PC-3 (cell line): ENCODE measurements at regions of chr3 and their contacts with region 1.

Region 1: GRCh38 chr3:4466741-4467521 is at the start of gene SUMF1:
- DNase-seq: peak; percentile 83
- ATAC-seq: peak; percentile 98
- H3K4me3 ChIP-seq: peak within 1 kb of the TSS; percentile 79
- H3K27ac ChIP-seq: peak within 1 kb of the TSS; percentile 63
- H3K4me1 ChIP-seq: no peaks in the 10 kb centered on the region
- H3K27me3 ChIP-seq: no peaks in the 10 kb centered on the region
- CTCF ChIP-seq: no peak
- total RNA-seq, gene SUMF1: 79.1 and 81.5 TPM in 2 replicates

Region 2: DNA sequence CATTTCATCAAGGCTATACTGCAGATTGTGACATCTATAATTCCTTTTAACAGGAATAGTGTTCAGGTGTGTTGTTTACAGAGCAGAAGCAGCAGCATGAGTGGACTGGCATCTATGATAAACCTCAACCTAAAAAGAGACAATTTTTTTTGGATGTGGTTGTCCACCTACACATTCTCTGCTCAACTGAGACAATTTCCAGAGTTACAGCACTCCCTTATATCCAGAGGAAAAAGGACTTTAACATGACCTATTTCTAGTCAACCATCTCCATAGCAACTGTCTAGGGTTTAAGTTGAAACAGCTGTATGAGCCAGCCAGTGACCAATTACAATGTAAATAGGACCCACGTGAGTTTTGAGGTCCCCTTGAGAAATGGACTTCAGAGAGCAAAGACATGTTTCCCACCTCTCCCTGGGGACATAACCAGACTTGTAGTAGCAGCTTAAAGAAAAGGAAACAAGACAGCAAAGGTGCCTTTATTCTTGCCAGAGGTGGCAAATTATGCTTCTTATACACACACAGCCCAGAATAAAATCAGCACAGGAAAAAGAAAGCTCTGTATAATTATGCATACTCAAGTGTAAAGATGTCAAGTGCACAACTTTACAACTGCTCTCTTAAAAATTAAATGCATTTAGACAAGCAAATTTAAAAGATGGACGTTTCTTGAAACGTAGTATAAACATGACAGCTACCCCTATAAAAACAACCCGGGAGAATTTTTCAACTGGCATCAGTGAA is 40.2 kb before region 1 on chr3:
- CTCF ChIA-PET with region 1: no interaction called
- POLR2A ChIA-PET with region 1: no interaction called
- intact Hi-C with region 1: loop called (anchors 2 kb)
- DNase-seq: peak; percentile 93
- ATAC-seq: peak; percentile 96
- H3K4me3 ChIP-seq: peak overlapping the region; percentile 11; the same call in 1 of the 2 replicates
- H3K27ac ChIP-seq: peak overlapping the region; percentile 76
- H3K4me1 ChIP-seq: peaks cover 25% of the 10 kb centered on the region
- H3K27me3 ChIP-seq: no peaks in the 10 kb centered on the region
- CTCF ChIP-seq: no peak

Region 3: DNA sequence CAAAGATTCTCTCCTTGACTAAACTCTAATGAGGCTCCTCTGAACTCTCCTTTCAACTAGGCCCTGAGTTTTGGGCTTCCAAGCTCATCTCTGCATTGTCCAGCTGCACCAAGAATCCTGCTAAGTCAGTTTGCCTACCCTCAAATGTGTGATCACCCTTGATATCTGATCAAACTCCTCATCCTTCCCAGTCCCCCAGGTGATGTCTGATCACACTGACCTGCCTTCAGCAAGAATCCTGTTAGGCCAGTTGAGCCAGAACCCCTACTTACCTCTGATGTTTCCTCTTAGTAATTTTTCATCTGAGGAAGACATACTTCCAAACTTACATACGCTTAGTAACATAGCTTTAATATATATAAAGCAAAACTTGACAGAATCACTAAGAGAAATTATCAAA is 28.6 kb before region 1 on chr3:
- CTCF ChIA-PET with region 1: no interaction called
- POLR2A ChIA-PET with region 1: interaction called, 26 read pairs
- intact Hi-C with region 1: no loop called
- DNase-seq: peak; percentile 84
- ATAC-seq: peak; percentile 46
- H3K4me3 ChIP-seq: no peak overlapping the region
- H3K27ac ChIP-seq: no peak overlapping the region
- H3K4me1 ChIP-seq: peaks cover 10% of the 10 kb centered on the region
- H3K27me3 ChIP-seq: no peaks in the 10 kb centered on the region
- CTCF ChIP-seq: no peak

Region 4: GRCh38 chr3:4736284-4736861 is 269.4 kb after region 1 on chr3:
- CTCF ChIA-PET with region 1: no interaction called
- POLR2A ChIA-PET with region 1: no interaction called
- intact Hi-C with region 1: no loop called
- DNase-seq: peak; percentile 91
- ATAC-seq: peak; percentile 78
- H3K4me3 ChIP-seq: no peak overlapping the region
- H3K27ac ChIP-seq: peak overlapping the region; percentile 85
- H3K4me1 ChIP-seq: peaks cover 46% of the 10 kb centered on the region
- H3K27me3 ChIP-seq: no peaks in the 10 kb centered on the region
- CTCF ChIP-seq: no peak